Left ventricle myocardium inferior (tissue), 1 donor: ENCODE measurements at regions of chr2 and their contacts with region 1.

Region 1: GRCh38 chr2:15939854-15940660 is at the start of gene MYCN:
- DNase-seq: peak; percentile 43
- H3K4me3 ChIP-seq: peak within 1 kb of the TSS; percentile 73
- H3K27ac ChIP-seq: peak within 1 kb of the TSS; percentile 44
- H3K4me1 ChIP-seq: peaks cover 52% of the 10 kb centered on the region
- H3K27me3 ChIP-seq: peaks cover 57% of the 10 kb centered on the region
- CTCF ChIP-seq: peak; percentile 16
- total RNA-seq, gene MYCN: 0.38 TPM

Region 2: GRCh38 chr2:14647714-14648113 is 1292.3 kb before region 1 on chr2:
- intact Hi-C with region 1: no loop called
- DNase-seq: no peak
- H3K4me3 ChIP-seq: no peak overlapping the region
- H3K27ac ChIP-seq: no peak overlapping the region
- H3K4me1 ChIP-seq: no peaks in the 10 kb centered on the region
- H3K27me3 ChIP-seq: no peaks in the 10 kb centered on the region
- CTCF ChIP-seq: no peak

Region 3: DNA sequence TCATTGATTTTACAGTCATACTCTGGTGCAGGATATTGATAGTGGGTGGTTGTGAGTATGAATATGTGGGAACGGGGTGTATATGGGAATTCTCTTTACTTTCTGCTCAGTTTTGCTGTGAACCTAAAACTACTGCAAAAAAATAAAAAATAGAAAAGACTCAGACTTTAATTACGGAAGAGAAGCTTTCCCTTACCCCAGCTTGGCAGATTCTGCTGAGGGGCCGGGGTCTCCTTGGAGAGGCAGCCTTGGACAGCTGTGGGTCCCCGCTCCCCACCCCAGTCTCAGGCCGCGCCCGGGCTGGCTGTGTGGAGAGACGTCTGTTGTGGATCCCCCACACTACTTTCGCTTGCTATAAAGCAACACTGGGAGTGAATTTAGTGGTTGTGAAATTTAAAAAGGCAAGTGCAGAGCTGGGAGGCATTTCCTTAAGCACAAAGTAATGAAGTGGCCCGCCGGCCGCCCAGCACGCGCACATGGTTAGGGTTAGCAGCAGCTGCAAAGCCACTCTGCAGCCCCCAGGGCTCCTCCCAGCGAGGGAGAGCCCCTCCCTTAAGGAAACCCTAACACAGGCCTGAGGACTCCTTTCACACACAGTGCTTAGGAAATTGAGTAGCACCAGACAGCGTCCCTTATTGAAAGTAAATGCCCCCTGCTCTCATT is 246.0 kb before region 1 on chr2:
- intact Hi-C with region 1: no loop called
- DNase-seq: no peak
- H3K4me3 ChIP-seq: no peak overlapping the region
- H3K27ac ChIP-seq: no peak overlapping the region
- H3K4me1 ChIP-seq: peaks cover 5% of the 10 kb centered on the region
- H3K27me3 ChIP-seq: peaks cover 5% of the 10 kb centered on the region
- CTCF ChIP-seq: no peak

Region 4: DNA sequence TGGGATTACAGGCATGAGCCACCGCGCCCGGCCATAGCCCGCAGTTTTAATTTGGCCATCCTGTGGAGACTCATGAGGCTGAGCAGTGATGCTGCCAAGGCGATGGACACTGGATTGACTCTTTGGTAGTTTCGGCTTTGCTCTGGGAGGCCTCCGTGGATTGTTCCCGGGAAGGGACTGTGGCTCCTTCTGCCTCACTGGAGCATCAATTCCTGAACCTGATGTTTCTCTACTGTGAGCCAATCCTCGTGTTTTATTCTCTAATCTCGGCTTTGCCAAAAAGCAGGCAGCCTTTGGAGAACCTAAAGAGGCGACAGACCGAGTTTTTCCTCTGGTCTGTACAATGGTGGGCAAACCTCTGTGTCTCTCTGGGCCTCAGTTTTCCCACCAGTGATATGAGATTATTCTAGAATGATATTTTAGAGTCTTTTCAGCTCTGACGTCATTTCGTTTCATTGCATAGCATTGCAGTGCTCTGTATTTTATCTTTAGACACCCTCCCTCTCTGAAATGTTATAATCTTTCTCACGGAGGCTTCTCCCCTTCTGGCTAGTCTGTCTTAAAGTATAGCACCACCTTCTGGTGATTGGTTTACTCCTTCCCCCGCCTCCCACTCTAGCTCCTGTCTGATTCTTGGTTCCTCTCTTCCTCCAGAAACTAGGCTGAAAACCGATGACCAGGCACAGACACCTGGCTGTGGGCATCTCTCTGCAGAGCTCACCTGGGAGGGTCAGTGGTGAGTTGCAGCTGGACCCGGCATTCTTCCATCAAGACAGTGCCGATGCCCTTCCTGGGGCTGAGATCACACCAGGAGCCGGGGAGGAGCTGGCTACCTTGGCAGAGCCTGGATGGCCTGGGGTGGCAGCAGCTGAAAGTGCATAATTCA is 341.6 kb after region 1 on chr2:
- intact Hi-C with region 1: loop called (anchors 5 kb)
- DNase-seq: no peak
- H3K4me3 ChIP-seq: no peak overlapping the region
- H3K27ac ChIP-seq: no peak overlapping the region
- H3K4me1 ChIP-seq: no peaks in the 10 kb centered on the region
- H3K27me3 ChIP-seq: peaks cover 4% of the 10 kb centered on the region
- CTCF ChIP-seq: peak; percentile 69